Heart left ventricle (tissue), 16 donors: ENCODE measurements at regions of chr6 and their contacts with region 1.

Region 1: GRCh38 chr6:167247814-167248595 is 43.1 kb upstream of the UNC93A start:
- DNase-seq: no peak
- ATAC-seq: no peak
- H3K4me3 ChIP-seq: no peak overlapping the region
- H3K27ac ChIP-seq: no peak overlapping the region
- H3K4me1 ChIP-seq: no peaks in the 10 kb centered on the region
- H3K27me3 ChIP-seq: peaks cover 0 to 19% (median 0%) of the 10 kb centered on the region in 9 donors
- CTCF ChIP-seq: no peak
- POLR2A ChIP-seq: no peak

Region 2: DNA sequence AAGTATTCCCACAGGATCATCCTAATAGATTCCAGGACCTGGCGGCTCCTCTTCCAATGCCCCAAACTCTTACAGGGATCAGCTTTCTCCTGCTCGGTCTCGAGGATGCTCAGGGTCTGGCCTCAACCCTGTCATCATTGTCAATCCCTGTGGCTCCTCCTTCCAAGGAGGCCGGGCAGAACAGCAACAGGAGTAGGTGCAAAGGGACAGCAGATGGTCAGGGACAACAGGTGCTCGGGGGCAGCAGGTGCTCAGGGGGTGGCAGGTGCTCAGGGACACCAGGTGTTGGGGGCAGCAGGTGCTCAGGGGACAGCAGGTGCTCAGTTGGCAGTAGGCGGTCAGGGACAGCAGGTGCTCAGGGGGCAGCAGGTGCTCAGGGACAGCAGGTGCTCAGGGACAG is 161.7 kb after region 1 on chr6:
- intact Hi-C with region 1: loop called in 2 of 10 experiments (anchors 2 to 5 kb)
- DNase-seq: no peak
- ATAC-seq: no peak
- H3K4me3 ChIP-seq: no peak overlapping the region
- H3K27ac ChIP-seq: no peak overlapping the region
- H3K4me1 ChIP-seq: no peaks in the 10 kb centered on the region
- H3K27me3 ChIP-seq: peaks cover 0 to 17% (median 0%) of the 10 kb centered on the region in 9 donors
- CTCF ChIP-seq: no peak
- POLR2A ChIP-seq: no peak